Posterior cingulate gyrus (tissue), 11 donors: ENCODE measurements at regions of chr14 and their contacts with region 1.

Region 1: DNA sequence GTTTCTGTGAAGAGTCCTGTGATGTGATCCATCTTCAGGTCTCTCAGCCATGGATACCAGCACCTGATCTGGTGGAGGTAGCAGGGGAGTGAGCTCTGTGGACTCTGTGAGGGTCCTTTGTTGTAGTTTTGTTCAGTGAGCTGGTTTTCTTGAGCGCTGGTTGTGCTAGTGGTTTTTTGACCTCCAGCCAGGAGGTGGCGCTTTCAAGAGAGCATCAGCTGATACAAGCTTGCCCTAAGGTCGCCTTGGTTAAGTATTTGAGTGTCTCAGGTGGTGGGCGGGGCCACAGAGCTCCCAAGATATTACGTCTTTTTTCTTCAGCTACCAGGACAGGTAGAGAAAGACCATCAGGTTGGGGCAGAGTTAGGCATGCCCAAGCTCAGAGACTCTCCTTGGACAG is 139.7 kb downstream of the TTLL5 start:
- DNase-seq: no peak

Region 2: DNA sequence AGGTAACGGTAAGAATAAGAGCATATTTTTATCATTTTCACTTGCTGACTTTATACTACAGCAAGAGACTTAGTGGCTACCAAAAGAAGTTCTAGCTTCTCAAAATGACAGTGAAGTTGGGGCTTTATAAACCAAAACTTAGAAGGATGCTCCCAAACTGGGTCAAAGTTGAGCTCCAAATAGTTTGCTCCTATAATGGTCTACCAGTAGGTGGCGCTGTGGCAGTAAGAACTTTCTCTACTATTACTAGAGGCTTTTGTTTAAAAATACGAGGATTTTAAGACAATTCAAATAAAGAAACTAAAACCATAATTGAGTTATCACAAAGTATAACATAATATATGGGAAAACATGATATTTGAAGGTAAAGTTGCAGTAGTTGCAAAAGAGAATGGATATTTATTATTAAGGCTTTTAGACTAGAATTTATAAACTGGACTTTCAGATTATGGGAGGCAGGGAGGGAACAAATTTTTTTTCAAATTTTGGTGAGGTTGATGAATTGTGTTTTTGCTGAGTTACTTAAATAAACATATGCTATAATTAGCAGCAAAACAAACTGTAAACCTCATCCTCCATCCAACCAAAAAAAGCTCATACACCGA is 106.0 kb after region 1 on chr14:
- intact Hi-C with region 1: loop called (anchors 10 kb)
- DNase-seq: peak in 5 of 10 donors; percentile 52 to 83 (median 76)